GM12878 (cell line): ENCODE measurements at regions of chr5 and their contacts with region 1.

Region 1: DNA sequence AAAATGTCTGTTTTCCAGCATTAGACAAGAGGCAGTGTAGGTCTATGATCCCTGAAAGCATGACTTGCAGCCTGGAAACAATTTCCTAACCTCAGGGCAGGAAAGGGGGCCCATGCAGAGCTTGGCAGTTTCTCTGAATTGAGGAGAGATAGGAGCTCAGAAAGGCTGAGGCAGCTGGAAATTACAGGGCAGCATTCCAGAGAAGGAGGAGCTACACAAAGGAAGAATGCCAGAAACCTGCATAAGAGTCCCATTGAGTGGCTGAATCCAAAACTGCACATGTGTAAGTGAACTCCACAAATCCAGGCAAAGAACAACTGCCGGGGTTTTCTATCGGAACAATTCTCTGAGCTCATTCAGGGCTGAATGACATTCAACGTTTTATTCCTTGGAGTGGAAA is 346.8 kb downstream of the PIK3R1 start:
- DNase-seq: no peak
- ATAC-seq: no peak
- H3K4me3 ChIP-seq: no peak overlapping the region
- H3K27ac ChIP-seq: no peak overlapping the region
- H3K4me1 ChIP-seq: peaks cover 6% of the 10 kb centered on the region; the same call in 1 of the 2 replicates
- H3K27me3 ChIP-seq: no peaks in the 10 kb centered on the region
- CTCF ChIP-seq: no peak
- EP300 ChIP-seq: no peak
- POLR2A ChIP-seq: no peak
- RAD21 ChIP-seq: no peak

Region 2: DNA sequence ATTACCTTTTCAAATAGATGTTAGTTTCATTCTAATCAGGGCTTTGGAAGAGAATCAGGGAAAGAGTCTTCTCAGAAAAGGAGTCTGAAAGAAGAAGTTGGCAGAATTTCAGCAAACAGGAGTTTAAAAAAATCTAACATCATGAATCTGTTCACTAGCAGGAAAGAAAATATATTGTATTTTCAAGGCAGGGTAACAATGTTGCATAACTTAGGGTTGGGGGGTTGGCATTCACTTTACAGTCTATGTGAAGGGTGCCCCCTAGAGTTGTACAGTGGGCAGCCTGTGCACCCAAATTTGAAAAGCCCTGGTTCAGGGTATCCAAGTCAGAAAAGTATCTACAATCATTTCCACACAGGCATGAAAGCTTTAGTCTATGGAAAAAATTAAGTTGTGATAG is 183.1 kb after region 1 on chr5:
- CTCF ChIA-PET with region 1: no interaction called
- POLR2A ChIA-PET with region 1: no interaction called
- RAD21 ChIA-PET with region 1: no interaction called
- SMC1A ChIA-PET with region 1: interaction called, 4 read pairs
- in situ Hi-C with region 1: no loop called
- intact Hi-C with region 1: loop called (anchors 10 kb)
- DNase-seq: no peak
- ATAC-seq: peak; percentile 49; the same call in 1 of the 3 replicates
- H3K4me3 ChIP-seq: no peak overlapping the region
- H3K27ac ChIP-seq: no peak overlapping the region
- H3K4me1 ChIP-seq: 0 out of 2 replicates have a peak, but pooled peaks cover 3% of the 10 kb centered on the region
- H3K27me3 ChIP-seq: no peaks in the 10 kb centered on the region; a peak in 1 of 4 replicates
- CTCF ChIP-seq: peak; percentile 32 to 40 (median 38); a peak in 4 of 6 replicates
- EP300 ChIP-seq: no peak
- POLR2A ChIP-seq: no peak
- RAD21 ChIP-seq: peak; percentile 36; the same call in 1 of the 2 replicates